ENCODE measurements at regions of chr18 and their contacts with region 1.

Region 1: DNA sequence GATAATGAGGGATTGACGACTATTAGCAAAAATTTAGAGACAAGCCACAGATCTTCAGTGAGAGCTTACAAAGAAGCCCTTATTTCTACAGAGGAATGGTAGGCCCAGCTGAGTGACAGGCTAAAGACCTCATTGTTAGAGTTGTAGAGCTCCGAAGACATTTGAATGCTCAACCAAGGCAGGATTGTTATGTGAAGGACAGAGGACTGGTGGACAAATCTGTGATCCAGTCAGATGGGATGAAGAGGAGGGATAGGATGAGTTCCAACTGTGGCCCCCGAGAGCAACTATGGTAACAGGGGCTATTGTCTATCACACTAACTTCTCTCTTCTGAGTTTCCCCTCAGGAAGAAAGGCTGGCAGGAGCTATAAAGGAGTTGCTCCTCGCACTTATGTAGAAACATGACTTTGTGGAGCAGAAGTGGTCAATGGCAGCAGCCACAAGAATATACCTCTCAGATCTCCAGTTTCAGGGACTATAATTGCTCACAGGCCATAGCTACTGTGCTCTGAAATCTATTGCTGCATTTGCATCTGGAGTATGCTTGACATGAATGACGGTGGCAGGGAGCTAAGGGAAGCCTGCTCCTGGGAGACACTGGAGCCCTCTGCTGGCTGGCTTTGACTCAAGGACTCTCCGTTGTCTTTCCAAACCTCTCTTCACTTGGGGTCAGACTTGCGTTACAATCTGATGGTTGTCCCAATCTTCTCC is 50.3 kb upstream of the GREB1L start:
- DNase-seq: peak; percentile 75 to 77
- H3K4me3 ChIP-seq: no peak overlapping the region
- H3K4me3 Mint-ChIP-seq: no peak overlapping the region
- H3K27ac Mint-ChIP-seq: no peak overlapping the region
- H3K4me1 ChIP-seq: no peaks in the 10 kb centered on the region
- H3K4me1 Mint-ChIP-seq: peaks cover 13% of the 10 kb centered on the region
- H3K27me3 ChIP-seq: no peaks in the 10 kb centered on the region
- H3K27me3 Mint-ChIP-seq: no peaks in the 10 kb centered on the region
- CTCF ChIP-seq: peak; percentile 83 to 85

Region 2: GRCh38 chr18:21111341-21112139 is 80.2 kb before region 1 on chr18 and contains the start of gene ROCK1:
- CTCF ChIA-PET with region 1: interaction called, 11 read pairs
- POLR2A ChIA-PET with region 1: no interaction called
- intact Hi-C with region 1: no loop called
- DNase-seq: peak; percentile 97 to 98
- H3K4me3 ChIP-seq: peak within 1 kb of the TSS; percentile 90
- H3K4me3 Mint-ChIP-seq: no peak within 1 kb of the TSS
- H3K27ac Mint-ChIP-seq: peak within 1 kb of the TSS; percentile 79
- H3K4me1 ChIP-seq: peaks cover 7% of the 10 kb centered on the region; the same call in 1 of the 2 replicates
- H3K4me1 Mint-ChIP-seq: no peaks in the 10 kb centered on the region
- H3K27me3 ChIP-seq: no peaks in the 10 kb centered on the region
- H3K27me3 Mint-ChIP-seq: no peaks in the 10 kb centered on the region
- CTCF ChIP-seq: no peak
- total RNA-seq, gene ROCK1: 50.3 and 51.3 TPM in 2 replicates

Region 3: DNA sequence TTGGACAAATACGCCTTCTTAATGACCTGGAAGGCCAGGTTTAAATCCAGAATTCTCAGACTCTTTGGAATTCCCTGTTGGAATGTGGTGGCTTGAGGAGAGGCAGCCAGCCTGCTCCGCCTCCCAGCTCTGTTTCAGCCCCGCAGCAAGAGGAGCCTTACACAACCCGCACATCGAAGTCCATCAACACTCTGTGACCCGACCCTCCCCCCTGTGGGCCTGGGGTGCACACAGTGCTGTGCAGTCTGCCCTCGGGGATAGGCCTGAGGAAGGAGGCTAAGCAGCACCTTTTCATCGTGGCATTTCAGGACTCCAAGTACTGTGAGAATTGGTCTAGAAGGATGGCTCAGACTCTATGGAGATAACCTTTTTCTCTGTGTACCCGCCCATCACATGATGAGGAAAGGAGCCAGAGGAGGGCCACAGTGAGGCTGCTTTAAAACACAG is 124.0 kb after region 1 on chr18:
- CTCF ChIA-PET with region 1: interaction called, 4 read pairs
- POLR2A ChIA-PET with region 1: no interaction called
- intact Hi-C with region 1: loop called (anchors 5 kb)
- DNase-seq: peak; percentile 96 to 97
- H3K4me3 ChIP-seq: peak overlapping the region; percentile 25; the same call in 1 of the 2 replicates
- H3K4me3 Mint-ChIP-seq: peak overlapping the region; percentile 69
- H3K27ac Mint-ChIP-seq: peak overlapping the region; percentile 96
- H3K4me1 ChIP-seq: peaks cover 44% of the 10 kb centered on the region
- H3K4me1 Mint-ChIP-seq: peaks cover 36% of the 10 kb centered on the region
- H3K27me3 ChIP-seq: no peaks in the 10 kb centered on the region
- H3K27me3 Mint-ChIP-seq: no peaks in the 10 kb centered on the region
- CTCF ChIP-seq: peak in 1 of 2 experiments; percentile 19

Region 4: DNA sequence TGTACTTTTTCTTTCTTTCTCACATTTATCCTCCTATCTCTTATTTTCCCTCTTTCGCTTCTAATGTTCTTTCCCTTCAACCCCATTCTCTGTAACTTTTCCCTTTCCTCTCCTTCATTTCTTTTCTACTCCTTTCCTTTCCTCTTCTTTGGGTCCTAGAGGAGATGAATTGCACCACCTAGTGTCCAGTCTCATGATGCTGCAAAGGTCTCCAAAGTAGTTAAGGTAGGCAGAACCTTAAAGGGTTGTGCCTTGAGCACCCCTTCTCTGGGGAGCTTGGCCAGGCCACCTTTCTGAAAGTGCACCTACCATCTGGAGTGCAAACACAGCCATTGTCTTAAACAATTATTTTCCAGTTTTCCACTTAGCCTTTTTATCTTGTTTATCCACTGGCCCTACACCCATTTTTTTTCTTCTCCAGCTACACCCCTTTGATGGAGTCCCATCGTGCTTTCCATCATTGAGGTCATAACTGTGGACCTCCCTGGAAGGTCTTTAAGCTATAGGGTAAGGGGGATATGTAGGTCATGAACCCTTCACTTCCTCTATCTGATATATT is 252.8 kb after region 1 on chr18:
- CTCF ChIA-PET with region 1: interaction called, 5 read pairs
- POLR2A ChIA-PET with region 1: no interaction called
- intact Hi-C with region 1: loop called (anchors 1 kb)
- DNase-seq: peak; percentile 50 to 61
- H3K4me3 ChIP-seq: no peak overlapping the region
- H3K4me3 Mint-ChIP-seq: no peak overlapping the region
- H3K27ac Mint-ChIP-seq: peak overlapping the region; percentile 2
- H3K4me1 ChIP-seq: peaks cover 19% of the 10 kb centered on the region
- H3K4me1 Mint-ChIP-seq: peaks cover 12% of the 10 kb centered on the region
- H3K27me3 ChIP-seq: no peaks in the 10 kb centered on the region
- H3K27me3 Mint-ChIP-seq: no peaks in the 10 kb centered on the region
- CTCF ChIP-seq: peak; percentile 78 to 89

Measured in Caco-2 (cell line).